Activated CD4-positive, alpha-beta memory T cell treated with anti-CD3 and anti-CD28 coated beads for 36 hours (primary cell): ENCODE measurements at regions of chr6 and their contacts with region 1.

Region 1: DNA sequence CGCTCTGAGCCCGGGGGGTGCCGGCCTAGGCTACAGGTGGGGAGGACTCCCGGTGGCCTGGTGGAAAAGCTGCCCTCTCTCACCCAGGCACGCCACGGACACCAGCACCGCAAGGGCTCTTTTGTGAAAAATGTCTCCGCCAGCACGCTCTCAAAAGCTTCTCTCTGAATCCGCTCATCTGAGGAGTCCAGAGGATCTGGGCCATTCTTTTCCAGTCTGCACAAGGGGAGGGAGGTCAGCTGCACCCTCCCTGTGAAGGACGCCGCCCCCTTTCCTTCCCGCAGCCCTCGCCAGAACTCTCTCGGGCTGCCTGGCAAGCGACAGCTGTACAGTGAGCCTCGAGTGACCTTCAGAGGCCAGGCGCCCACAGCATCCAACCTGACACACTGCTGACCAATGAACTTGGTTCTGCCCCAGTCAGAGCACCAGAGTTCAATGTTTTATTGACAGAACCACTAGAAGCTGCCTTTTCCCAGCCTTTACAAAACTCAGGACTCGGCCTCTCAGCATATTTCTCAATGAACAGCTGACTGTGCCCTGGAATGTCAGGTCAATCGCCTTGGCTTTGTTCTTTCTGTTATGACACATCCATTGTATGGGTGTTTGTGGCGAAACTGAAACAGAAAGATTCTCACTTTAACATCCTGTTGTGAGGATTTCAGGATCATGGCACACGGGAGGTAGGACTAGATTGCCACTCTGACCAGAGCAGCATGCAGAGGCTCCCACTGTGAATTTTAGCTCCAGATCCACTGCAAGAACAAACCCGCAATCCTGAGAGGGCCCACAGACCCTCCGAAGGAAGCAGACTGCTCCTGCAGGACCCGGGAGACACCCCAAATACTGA is 26.7 kb downstream of the SERPINB9 start:
- DNase-seq: peak; percentile 44
- H3K4me3 Mint-ChIP-seq: peak overlapping the region; percentile 80
- H3K27ac Mint-ChIP-seq: peak overlapping the region; percentile 90
- H3K4me1 Mint-ChIP-seq: peaks cover 81% of the 10 kb centered on the region
- H3K27me3 Mint-ChIP-seq: no peaks in the 10 kb centered on the region

Region 2: DNA sequence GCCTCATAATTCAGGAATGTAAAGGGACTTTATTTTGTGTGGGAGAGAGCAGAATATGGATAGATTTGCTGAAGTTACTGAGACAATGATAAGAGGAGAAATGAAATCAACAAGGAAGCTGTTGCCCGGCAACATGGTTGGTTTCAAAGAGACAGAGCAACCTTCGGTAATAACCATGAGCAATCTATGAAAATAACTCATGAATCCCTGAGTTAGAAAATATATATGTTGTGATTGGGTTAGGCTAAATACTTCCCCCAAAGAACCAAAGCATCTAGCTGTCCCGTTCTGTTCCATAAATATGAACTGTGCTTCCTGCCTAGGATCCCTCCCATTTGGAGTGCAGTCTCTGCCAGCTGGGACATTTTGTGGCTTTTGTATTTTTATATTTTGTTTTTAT is 57.8 kb before region 1 on chr6:
- CTCF ChIA-PET with region 1: no interaction called
- POLR2A ChIA-PET with region 1: no interaction called
- intact Hi-C with region 1: no loop called
- DNase-seq: peak; percentile 38
- H3K4me3 Mint-ChIP-seq: no peak overlapping the region
- H3K27ac Mint-ChIP-seq: no peak overlapping the region
- H3K4me1 Mint-ChIP-seq: peaks cover 33% of the 10 kb centered on the region
- H3K27me3 Mint-ChIP-seq: no peaks in the 10 kb centered on the region

Region 3: GRCh38 chr6:2862712-2863181 is 13.7 kb before region 1 on chr6:
- CTCF ChIA-PET with region 1: interaction called, 12 read pairs
- POLR2A ChIA-PET with region 1: interaction called, 4 read pairs
- intact Hi-C with region 1: loop called (anchors 1 kb)
- DNase-seq: peak; percentile 84
- H3K4me3 Mint-ChIP-seq: peak overlapping the region; percentile 39
- H3K27ac Mint-ChIP-seq: peak overlapping the region; percentile 96
- H3K4me1 Mint-ChIP-seq: peaks cover 77% of the 10 kb centered on the region
- H3K27me3 Mint-ChIP-seq: no peaks in the 10 kb centered on the region

Region 4: GRCh38 chr6:2900821-2901644 is 24.6 kb after region 1 on chr6:
- CTCF ChIA-PET with region 1: interaction called, 12 read pairs
- POLR2A ChIA-PET with region 1: interaction called, 5 read pairs
- intact Hi-C with region 1: loop called (anchors 2 kb)
- DNase-seq: no peak
- H3K4me3 Mint-ChIP-seq: peak overlapping the region; percentile 99
- H3K27ac Mint-ChIP-seq: peak overlapping the region; percentile 95
- H3K4me1 Mint-ChIP-seq: peaks cover 41% of the 10 kb centered on the region
- H3K27me3 Mint-ChIP-seq: no peaks in the 10 kb centered on the region